ENCODE measurements at regions of chr1 and their contacts with region 1.

Region 1: DNA sequence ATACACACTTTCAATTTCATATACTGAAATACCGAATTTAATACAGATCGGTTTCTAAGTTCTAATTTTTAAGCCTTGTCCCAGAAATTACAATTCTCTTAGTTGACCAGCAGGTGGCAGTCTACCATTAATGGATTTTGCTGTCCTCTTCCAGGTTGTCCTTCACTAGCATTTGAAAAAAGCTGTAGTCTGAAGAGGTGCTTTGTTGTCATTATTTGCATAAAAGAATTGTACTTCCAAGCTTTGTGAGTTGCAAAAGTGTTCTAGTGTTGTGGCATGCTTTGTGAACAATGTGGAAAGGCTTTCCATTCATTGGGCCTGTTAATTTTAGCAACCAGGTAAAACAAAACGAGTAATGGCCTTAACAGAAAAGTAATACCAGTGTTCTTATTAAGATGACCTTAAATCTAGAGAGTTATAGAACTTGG is 193.6 kb downstream of the RPS6KC1 start:
- DNase-seq: peak; percentile 68
- H3K4me3 ChIP-seq: no peak overlapping the region
- H3K27ac ChIP-seq: no peak overlapping the region
- H3K4me1 ChIP-seq: no peaks in the 10 kb centered on the region
- H3K27me3 ChIP-seq: no peaks in the 10 kb centered on the region
- CTCF ChIP-seq: peak; percentile 56 to 57
- POLR2A ChIP-seq: no peak

Region 2: DNA sequence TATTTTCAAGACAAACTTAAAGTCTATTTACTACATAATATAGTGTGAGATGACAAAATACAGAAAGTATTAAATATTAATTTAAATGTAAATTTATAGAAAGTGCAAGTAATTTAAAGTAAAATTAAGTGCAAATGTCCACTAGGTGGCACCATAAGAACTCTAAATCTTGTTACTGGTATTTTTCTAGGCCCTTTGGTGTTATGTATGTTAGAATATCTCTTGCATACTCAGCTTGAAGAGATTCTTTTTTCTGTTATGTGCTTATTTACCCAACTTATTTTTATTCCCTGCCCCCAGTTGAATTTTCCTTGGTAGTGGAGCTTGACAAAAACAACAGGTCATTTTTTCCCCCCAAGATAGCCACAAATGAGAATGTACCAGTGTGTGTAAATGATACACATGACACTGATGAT is 122.2 kb before region 1 on chr1:
- CTCF ChIA-PET with region 1: interaction called, 6 read pairs
- POLR2A ChIA-PET with region 1: no interaction called
- dilution Hi-C with region 1: no loop called
- intact Hi-C with region 1: loop called (anchors 1 kb)
- DNase-seq: peak; percentile 66
- H3K4me3 ChIP-seq: no peak overlapping the region
- H3K27ac ChIP-seq: no peak overlapping the region
- H3K4me1 ChIP-seq: peaks cover 39% of the 10 kb centered on the region
- H3K27me3 ChIP-seq: no peaks in the 10 kb centered on the region
- CTCF ChIP-seq: peak; percentile 18 to 21
- POLR2A ChIP-seq: no peak

Region 3: GRCh38 chr1:213162338-213162737 is 82.3 kb before region 1 on chr1:
- CTCF ChIA-PET with region 1: no interaction called
- POLR2A ChIA-PET with region 1: no interaction called
- dilution Hi-C with region 1: no loop called
- intact Hi-C with region 1: no loop called
- DNase-seq: no peak
- H3K4me3 ChIP-seq: no peak overlapping the region
- H3K27ac ChIP-seq: no peak overlapping the region
- H3K4me1 ChIP-seq: no peaks in the 10 kb centered on the region
- H3K27me3 ChIP-seq: no peaks in the 10 kb centered on the region
- CTCF ChIP-seq: no peak
- POLR2A ChIP-seq: no peak

Region 4: DNA sequence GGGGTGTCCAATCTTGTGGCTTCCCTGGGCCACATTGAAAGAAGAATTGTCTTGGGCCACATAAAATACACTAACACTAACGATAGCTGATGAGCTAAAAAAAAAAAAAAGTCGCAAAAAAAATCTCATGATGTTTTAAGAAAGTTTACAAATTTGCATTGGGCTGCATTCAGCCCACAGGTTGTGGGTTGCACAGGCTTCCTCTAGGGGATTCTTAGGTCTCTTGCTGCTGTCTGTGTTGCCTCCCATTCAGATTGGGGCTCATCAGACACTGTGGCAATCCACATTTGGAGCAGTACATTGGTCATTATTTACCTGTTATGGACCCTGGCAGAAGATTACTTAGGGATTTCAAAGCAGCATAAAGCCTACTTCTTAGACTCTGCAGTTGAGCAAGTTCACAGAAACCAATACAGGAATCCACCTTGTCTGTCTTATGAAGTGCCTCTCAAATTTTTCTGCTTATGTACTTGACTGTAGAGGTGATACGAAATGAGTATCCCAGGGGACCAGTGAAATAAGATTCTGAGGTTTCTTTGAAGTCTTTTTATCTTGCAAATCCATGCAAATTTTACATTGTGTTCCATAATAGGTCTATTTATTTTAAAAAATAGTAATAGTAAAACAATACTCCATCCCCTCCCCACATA is 11.9 kb after region 1 on chr1:
- CTCF ChIA-PET with region 1: interaction called, 10 read pairs
- POLR2A ChIA-PET with region 1: no interaction called
- dilution Hi-C with region 1: no loop called
- intact Hi-C with region 1: no loop called
- DNase-seq: no peak
- H3K4me3 ChIP-seq: no peak overlapping the region
- H3K27ac ChIP-seq: no peak overlapping the region
- H3K4me1 ChIP-seq: peaks cover 8% of the 10 kb centered on the region
- H3K27me3 ChIP-seq: no peaks in the 10 kb centered on the region
- CTCF ChIP-seq: no peak
- POLR2A ChIP-seq: no peak

Region 5: GRCh38 chr1:213286235-213286634 is 41.6 kb after region 1 on chr1:
- CTCF ChIA-PET with region 1: interaction called, 10 read pairs
- POLR2A ChIA-PET with region 1: no interaction called
- dilution Hi-C with region 1: no loop called
- intact Hi-C with region 1: loop called (anchors 1 kb)
- DNase-seq: no peak
- H3K4me3 ChIP-seq: no peak overlapping the region
- H3K27ac ChIP-seq: no peak overlapping the region
- H3K4me1 ChIP-seq: no peaks in the 10 kb centered on the region
- H3K27me3 ChIP-seq: no peaks in the 10 kb centered on the region
- CTCF ChIP-seq: peak in 1 of 2 donors; percentile 25
- POLR2A ChIP-seq: no peak

Region 6: GRCh38 chr1:213374369-213374768 is 129.7 kb after region 1 on chr1:
- CTCF ChIA-PET with region 1: interaction called, 11 read pairs
- POLR2A ChIA-PET with region 1: no interaction called
- dilution Hi-C with region 1: no loop called
- intact Hi-C with region 1: loop called (anchors 2 kb)
- DNase-seq: peak; percentile 61
- H3K4me3 ChIP-seq: no peak overlapping the region
- H3K27ac ChIP-seq: no peak overlapping the region
- H3K4me1 ChIP-seq: no peaks in the 10 kb centered on the region
- H3K27me3 ChIP-seq: no peaks in the 10 kb centered on the region
- CTCF ChIP-seq: peak; percentile 84 to 95
- POLR2A ChIP-seq: no peak

Region 7: GRCh38 chr1:213564215-213564659 is 319.6 kb after region 1 on chr1:
- CTCF ChIA-PET with region 1: interaction called, 3 read pairs
- POLR2A ChIA-PET with region 1: no interaction called
- dilution Hi-C with region 1: no loop called
- intact Hi-C with region 1: loop called (anchors 1 kb)
- DNase-seq: peak; percentile 51
- H3K4me3 ChIP-seq: no peak overlapping the region
- H3K27ac ChIP-seq: no peak overlapping the region
- H3K4me1 ChIP-seq: no peaks in the 10 kb centered on the region
- H3K27me3 ChIP-seq: no peaks in the 10 kb centered on the region
- CTCF ChIP-seq: peak; percentile 40 to 52
- POLR2A ChIP-seq: no peak

Measured in endothelial cell of umbilical vein (primary cell).